SK-MEL-5 (cell line): ENCODE measurements at regions of chr1 and their contacts with region 1.

Region 1: DNA sequence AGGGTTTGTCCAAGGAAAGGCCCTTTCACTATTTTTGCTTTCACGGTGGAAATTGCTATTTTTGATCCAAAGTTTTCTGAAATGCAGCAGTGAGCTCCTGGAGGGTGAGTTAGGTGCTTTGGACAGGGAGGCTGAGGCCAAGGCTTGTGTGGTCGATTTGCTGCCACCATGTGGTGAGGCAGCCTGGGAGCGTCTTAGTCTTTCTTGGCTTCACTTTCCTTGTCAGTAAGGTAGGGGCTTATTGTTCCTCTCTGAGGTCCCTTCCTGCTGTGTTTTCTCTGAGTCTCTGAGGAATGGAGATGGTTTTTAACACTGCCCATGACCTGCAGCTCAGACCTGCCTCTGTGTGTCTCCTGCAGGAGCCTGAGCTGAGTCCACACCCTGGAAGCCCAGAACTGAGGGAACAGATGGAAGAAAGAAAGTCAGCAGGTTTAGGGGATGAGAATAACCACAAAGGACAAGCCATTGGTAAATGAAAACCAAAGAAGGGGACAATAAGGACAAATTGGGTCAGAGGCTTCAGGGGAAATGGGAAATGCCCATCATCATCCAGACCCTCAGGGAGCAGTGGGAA is 20.1 kb upstream of the S100A10 start:
- DNase-seq: peak; percentile 80

Region 2: GRCh38 chr1:151924679-151925587 is 88.8 kb before region 1 on chr1:
- in situ Hi-C with region 1: loop called (anchors 5 kb)
- DNase-seq: no peak